K562 (cell line): ENCODE measurements at regions of chr2 and their contacts with region 1.

Region 1: DNA sequence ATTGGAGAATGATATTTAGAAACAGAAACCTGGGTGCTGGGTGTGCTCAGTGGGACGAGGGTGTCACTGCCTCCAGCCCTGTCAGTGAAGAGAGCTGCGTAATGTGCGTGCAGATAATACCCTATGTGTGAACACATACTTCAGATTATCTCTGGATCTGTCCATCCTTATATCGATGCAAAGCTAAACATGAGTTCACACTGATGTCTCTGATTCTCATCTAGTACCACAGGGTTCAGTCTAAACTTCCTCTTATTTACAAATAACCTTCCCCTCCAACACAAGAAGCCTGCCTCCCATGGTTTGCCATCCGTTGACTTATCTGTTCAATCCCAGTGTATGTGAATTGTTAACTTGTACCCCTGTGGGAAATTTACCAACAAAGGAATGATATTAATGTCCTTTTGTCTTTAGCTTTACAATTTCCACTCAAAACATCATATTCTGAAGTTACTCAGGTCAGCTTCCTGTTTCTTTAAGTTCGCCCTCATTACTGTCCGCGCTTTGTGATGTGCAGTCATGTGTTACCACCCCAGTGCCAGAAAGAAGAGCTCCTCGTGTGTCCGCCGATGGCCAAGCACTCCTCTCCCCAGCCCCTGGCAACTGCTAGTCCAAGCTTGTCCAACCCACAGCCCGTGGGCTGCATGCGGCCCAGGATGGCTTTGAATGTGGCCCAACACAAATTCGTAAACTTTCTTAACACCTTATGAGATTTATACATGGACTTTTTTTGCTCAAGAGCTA is 108.2 kb downstream of the RTP5 start:
- DNase-seq: no peak
- ATAC-seq: no peak
- H3K4me3 ChIP-seq: no peak overlapping the region
- H3K27ac ChIP-seq: no peak overlapping the region
- H3K4me1 ChIP-seq: no peaks in the 10 kb centered on the region
- H3K27me3 ChIP-seq: 0 out of 5 replicates have a peak, but pooled peaks cover 0 to 1% of the 10 kb centered on the region in 2 experiments
- CTCF ChIP-seq: no peak
- EP300 ChIP-seq: no peak
- POLR2A ChIP-seq: no peak
- RAD21 ChIP-seq: no peak

Region 2: GRCh38 chr2:241724259-241724974 is 253.3 kb before region 1 on chr2:
- CTCF ChIA-PET with region 1: no interaction called
- POLR2A ChIA-PET with region 1: no interaction called
- in situ Hi-C with region 1: no loop called
- intact Hi-C with region 1: no loop called
- DNase-seq: no peak
- ATAC-seq: peak; percentile 50
- H3K4me3 ChIP-seq: no peak overlapping the region
- H3K27ac ChIP-seq: no peak overlapping the region
- H3K4me1 ChIP-seq: peaks cover 0 to 9% of the 10 kb centered on the region in 2 experiments; a peak in 2 of 5 replicates
- H3K27me3 ChIP-seq: no peaks in the 10 kb centered on the region
- CTCF ChIP-seq: peak; percentile 16 to 32 (median 31); a peak in 1 of 6 replicates
- EP300 ChIP-seq: no peak
- POLR2A ChIP-seq: no peak
- RAD21 ChIP-seq: no peak; a peak in 1 of 4 replicates

Region 3: GRCh38 chr2:241877989-241878970 is 99.4 kb before region 1 on chr2:
- CTCF ChIA-PET with region 1: no interaction called
- POLR2A ChIA-PET with region 1: no interaction called
- in situ Hi-C with region 1: no loop called
- intact Hi-C with region 1: no loop called
- DNase-seq: peak; percentile 62 to 85 (median 70)
- ATAC-seq: peak; percentile 59
- H3K4me3 ChIP-seq: no peak overlapping the region
- H3K27ac ChIP-seq: no peak overlapping the region
- H3K4me1 ChIP-seq: peaks cover 14 to 48% of the 10 kb centered on the region in 2 experiments; a peak in 4 of 5 replicates
- H3K27me3 ChIP-seq: no peaks in the 10 kb centered on the region
- CTCF ChIP-seq: peak; percentile 52 to 81 (median 67)
- EP300 ChIP-seq: no peak
- POLR2A ChIP-seq: no peak
- RAD21 ChIP-seq: peak; percentile 48 to 64

Region 4: DNA sequence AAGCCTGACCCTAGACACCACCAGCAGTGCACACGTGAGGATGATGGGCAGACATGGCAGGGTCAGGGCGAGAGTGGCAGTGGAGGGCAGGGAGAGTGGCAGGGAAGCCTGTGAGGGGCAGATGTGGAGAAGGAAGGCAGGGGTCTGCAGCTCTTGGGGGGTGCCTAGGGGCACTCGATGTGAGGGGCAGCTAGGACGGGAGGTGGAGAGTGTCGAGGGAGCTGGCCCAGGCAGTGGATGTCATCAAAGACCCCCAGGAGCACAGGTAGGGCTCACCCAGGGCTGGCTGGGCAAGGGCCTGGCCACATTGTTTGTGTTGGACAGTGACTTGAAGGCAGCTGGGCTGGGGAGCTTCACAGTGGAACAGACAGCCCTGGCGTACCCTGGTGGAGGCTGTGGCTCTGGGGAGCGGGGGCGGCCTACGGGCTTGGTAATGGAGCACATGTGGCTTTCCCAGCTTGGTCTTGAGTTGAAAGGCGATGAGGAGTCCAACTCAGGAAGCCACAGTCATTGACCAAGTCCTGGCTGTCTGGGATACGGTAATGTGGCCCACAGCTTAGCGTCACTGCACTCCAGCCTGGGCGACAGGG is 21.1 kb before region 1 on chr2:
- CTCF ChIA-PET with region 1: no interaction called
- POLR2A ChIA-PET with region 1: no interaction called
- in situ Hi-C with region 1: no loop called
- intact Hi-C with region 1: loop called (anchors 1 kb)
- DNase-seq: no peak
- ATAC-seq: no peak
- H3K4me3 ChIP-seq: no peak overlapping the region
- H3K27ac ChIP-seq: no peak overlapping the region
- H3K4me1 ChIP-seq: peaks cover 0 to 14% of the 10 kb centered on the region in 2 experiments; a peak in 2 of 5 replicates
- H3K27me3 ChIP-seq: no peaks in the 10 kb centered on the region
- CTCF ChIP-seq: no peak
- EP300 ChIP-seq: no peak
- POLR2A ChIP-seq: no peak
- RAD21 ChIP-seq: no peak

Region 5: DNA sequence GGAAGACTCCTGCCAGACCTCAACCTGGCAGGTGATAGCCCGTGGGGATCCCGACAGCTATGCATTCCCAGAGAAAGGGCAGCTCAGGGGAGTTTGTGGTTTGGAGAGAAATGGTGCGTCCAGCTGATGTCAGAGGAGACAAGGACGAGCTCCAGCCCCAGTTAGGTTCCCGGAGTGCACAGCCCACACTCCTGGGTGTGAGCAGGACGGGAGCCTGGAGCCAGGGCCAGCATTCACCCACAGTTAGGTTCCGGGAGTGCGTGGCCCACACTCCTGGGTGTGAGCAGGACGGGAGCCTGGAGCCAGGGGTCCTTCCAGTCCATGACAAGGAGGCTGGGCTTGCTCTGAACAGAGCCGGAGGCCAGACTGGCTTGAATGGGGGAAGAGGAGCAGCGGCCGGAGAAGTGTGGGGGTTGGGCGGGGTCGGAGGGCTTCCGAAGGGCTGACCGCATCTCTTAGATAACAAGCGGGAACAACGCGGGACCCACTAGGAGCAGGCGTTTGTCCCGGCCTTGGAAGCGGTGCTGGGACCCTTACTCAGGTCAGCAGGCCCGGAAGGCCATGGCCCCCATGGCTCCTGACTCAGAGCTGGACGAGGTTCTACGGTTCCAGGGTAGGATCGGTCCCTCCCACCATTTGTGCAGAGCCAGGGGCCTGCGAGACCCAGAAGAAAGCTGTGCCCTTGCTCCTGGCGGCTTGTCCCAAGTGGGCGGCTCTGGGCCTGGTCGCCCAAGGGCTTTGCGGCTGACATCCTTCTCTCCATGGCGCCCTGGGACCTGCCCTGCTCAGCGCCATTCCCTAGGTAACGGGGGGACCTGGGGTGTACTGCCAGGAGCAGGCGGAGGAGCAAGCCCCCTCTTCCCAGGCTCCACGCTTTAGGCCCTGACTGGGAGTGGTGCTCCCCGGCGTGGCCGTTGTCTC is 77.4 kb after region 1 on chr2:
- CTCF ChIA-PET with region 1: no interaction called
- POLR2A ChIA-PET with region 1: no interaction called
- in situ Hi-C with region 1: no loop called
- intact Hi-C with region 1: no loop called
- DNase-seq: no peak
- ATAC-seq: no peak; the same call in 1 of the 3 replicates
- H3K4me3 ChIP-seq: no peak overlapping the region
- H3K27ac ChIP-seq: no peak overlapping the region
- H3K4me1 ChIP-seq: peaks cover 0 to 10% of the 10 kb centered on the region in 2 experiments; a peak in 2 of 5 replicates
- H3K27me3 ChIP-seq: peaks cover 36 to 54% of the 10 kb centered on the region in 2 experiments
- CTCF ChIP-seq: no peak
- EP300 ChIP-seq: no peak
- POLR2A ChIP-seq: no peak
- RAD21 ChIP-seq: no peak